PC-9 (cell line): ENCODE measurements at regions of chr3 and their contacts with region 1.

Region 1: DNA sequence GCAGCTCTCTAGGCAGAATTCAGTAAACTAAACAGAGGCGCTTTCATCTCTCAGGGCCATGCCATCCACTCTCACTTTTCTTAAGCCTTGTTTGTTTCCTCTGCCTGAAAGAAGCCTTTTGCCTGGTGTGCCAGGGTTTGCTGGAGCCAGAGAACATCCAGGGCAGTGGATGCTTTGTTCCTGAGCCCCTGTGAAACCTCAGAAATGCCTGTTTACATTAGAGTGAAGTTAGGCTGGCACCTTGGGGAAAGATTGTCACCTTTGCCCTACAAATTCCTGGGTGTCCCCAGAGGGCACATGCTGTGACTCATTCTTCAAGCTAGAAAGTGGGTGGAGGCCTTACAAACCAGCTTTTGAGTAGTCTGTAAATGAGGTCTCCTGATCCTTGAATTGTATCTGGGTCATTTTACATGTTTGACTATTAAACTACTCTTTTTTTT is 10.7 kb upstream of the TRAK1 start:
- DNase-seq: peak; percentile 86 to 96
- H3K4me3 ChIP-seq: peak overlapping the region; percentile 31; the same call in 1 of the 2 replicates
- H3K27ac ChIP-seq: peak overlapping the region; percentile 87
- H3K4me1 ChIP-seq: peaks cover 42% of the 10 kb centered on the region
- H3K27me3 ChIP-seq: no peaks in the 10 kb centered on the region
- CTCF ChIP-seq: no peak

Region 2: GRCh38 chr3:41681479-41681878 is 399.0 kb before region 1 on chr3:
- CTCF ChIA-PET with region 1: no interaction called
- POLR2A ChIA-PET with region 1: no interaction called
- intact Hi-C with region 1: loop called (anchors 10 kb)
- DNase-seq: peak; percentile 35 to 74
- H3K4me3 ChIP-seq: no peak overlapping the region
- H3K27ac ChIP-seq: 0 out of 2 replicates have a peak overlapping the region, but pooled peaks have one; percentile 33
- H3K4me1 ChIP-seq: peaks cover 21% of the 10 kb centered on the region
- H3K27me3 ChIP-seq: no peaks in the 10 kb centered on the region
- CTCF ChIP-seq: no peak

Region 3: DNA sequence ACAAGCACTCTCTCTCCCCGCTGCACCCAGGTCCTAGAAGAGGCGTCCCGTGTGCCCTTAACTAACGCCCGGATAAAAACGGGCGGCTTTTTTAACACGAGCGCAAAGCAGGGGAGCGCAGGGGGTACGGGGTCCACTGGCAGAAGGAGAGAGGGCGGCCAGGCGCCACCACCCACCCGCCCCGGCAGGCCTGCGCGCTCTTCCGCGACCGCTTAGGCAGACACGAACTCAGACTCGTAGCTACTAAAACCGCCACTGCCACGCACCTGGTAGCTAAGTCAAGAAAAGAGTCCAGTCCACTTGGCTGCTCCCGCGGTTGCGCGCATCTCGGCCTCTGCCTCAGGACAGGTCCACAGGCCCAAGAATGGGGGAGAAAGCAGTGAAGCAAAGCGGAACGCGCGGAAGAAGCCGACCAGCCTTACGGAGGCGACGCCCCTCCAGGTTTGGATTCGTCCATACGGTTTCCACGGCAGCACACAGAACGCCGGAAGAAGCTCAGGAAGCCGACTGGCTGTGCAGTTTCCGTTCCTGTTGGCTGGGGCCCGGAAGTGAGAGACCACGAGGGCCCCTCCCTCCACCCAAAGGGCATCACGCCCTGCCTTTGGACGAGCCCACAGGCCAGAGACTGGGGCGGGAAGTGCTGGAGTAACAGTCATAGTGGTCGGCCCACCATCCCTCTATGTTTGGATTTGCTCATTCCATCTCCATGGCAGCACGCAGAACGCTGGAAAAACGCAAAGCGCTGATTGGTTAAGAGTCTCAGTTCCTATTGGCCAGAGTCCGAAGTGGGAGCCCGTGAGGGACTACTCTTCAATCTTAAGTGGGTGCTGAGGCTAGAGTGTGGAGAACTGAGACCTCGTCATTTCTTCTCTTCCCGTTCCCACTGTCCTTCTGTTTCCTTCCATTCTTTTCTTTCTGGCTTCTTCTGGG is 118.5 kb before region 1 on chr3 and contains the start of gene ULK4:
- CTCF ChIA-PET with region 1: no interaction called
- POLR2A ChIA-PET with region 1: no interaction called
- intact Hi-C with region 1: loop called (anchors 2 kb)
- DNase-seq: peak; percentile 97
- H3K4me3 ChIP-seq: peak within 1 kb of the TSS; percentile 93
- H3K27ac ChIP-seq: peak within 1 kb of the TSS; percentile 18; the same call in 1 of the 2 replicates
- H3K4me1 ChIP-seq: 0 out of 2 replicates have a peak, but pooled peaks cover 14% of the 10 kb centered on the region
- H3K27me3 ChIP-seq: no peaks in the 10 kb centered on the region
- CTCF ChIP-seq: no peak
- total RNA-seq, gene ULK4: 5.9 and 8.7 TPM in 2 replicates

Region 4: DNA sequence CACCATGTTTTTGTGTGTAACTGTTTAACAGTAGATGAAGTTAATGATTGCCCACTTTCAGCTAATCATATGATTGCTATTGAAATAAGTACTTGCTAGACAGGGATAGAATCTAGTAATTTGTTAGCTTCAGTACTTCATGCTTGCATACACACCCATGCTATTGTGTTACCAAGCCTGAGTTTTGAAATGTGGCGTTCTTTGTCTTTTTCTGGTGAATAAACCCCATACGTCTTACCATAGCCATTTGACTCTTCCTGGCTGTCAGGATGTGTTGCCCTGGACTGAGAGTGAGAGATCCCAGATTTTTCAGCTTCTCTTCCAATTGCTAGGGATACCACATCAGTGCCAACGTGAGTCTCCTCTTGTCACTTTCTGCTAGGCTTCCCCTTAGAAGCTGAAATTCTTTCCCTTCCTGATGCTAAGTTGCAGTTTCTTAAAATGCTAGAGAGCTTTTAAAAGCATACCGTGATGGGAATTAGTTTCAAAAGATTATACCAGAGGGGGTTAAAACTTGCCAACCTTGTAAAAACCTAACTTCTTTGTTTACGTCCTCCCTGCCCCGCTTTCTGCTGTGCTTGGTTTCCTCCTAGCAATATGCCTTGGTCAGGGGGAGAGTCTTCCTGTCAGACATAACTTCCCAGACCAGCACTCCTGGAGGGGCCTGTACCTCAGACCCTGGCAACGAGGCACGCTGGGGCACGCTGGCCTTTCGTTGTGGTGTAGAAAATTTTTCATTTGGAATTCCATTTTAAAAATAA is 55.7 kb before region 1 on chr3:
- CTCF ChIA-PET with region 1: no interaction called
- POLR2A ChIA-PET with region 1: interaction called, 4 read pairs
- intact Hi-C with region 1: loop called (anchors 1 kb)
- DNase-seq: no peak
- H3K4me3 ChIP-seq: no peak overlapping the region
- H3K27ac ChIP-seq: no peak overlapping the region
- H3K4me1 ChIP-seq: peaks cover 35% of the 10 kb centered on the region
- H3K27me3 ChIP-seq: no peaks in the 10 kb centered on the region
- CTCF ChIP-seq: no peak

Region 5: DNA sequence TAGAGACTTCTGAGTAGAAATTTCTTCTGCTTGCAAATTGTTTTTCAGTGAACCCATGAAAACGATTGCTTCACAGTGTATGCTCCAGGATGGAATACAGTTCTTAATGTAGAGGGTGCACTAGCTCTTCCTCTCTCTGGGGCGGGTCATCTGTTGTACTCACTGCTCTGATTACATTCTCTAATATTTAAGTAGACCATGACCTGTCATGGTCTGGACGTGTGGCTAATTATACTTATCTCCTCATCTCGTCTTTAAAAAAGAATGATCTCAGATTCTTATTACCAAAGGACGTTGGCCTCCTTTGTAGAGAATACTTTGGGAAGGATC is 37.8 kb before region 1 on chr3:
- CTCF ChIA-PET with region 1: no interaction called
- POLR2A ChIA-PET with region 1: interaction called, 17 read pairs
- intact Hi-C with region 1: no loop called
- DNase-seq: no peak
- H3K4me3 ChIP-seq: no peak overlapping the region
- H3K27ac ChIP-seq: no peak overlapping the region
- H3K4me1 ChIP-seq: peaks cover 21% of the 10 kb centered on the region
- H3K27me3 ChIP-seq: no peaks in the 10 kb centered on the region
- CTCF ChIP-seq: no peak

Region 6: DNA sequence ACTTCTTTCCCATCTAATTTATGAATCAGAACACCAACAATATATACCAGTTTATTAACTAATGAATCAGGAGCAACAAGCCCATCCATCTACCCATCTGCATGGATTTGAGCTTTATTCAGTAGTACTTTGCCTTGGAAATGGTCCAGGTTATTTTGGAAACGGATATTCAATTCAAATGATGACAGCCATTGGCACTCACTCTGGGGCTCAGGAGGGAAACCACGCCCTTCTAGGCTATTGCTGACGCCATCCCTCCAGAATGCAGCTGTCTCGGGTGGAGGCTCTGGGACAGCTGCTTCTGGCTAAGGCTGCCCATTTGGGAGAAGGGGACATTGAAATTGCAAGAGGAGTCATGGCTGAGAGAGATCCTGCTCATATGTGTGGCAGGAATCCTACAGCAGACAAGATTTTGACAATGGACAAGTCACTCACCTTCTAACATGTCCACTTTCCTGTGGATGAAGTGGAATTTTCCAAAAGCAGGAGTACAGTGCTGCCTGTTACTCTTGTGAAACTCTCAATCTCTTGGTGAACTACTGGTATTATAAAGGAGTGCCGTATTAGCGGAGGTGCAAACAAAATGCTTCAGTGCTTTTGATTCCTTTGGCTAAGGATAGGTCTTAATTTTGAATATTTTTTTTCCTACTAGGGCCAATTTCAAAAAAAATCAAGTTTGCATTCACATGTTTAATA is 18.6 kb before region 1 on chr3:
- CTCF ChIA-PET with region 1: interaction called, 13 read pairs
- POLR2A ChIA-PET with region 1: no interaction called
- intact Hi-C with region 1: loop called (anchors 1 kb)
- DNase-seq: peak; percentile 71 to 76
- H3K4me3 ChIP-seq: no peak overlapping the region
- H3K27ac ChIP-seq: peak overlapping the region; percentile 29; the same call in 1 of the 2 replicates
- H3K4me1 ChIP-seq: peaks cover 20% of the 10 kb centered on the region
- H3K27me3 ChIP-seq: no peaks in the 10 kb centered on the region
- CTCF ChIP-seq: no peak

Region 7: DNA sequence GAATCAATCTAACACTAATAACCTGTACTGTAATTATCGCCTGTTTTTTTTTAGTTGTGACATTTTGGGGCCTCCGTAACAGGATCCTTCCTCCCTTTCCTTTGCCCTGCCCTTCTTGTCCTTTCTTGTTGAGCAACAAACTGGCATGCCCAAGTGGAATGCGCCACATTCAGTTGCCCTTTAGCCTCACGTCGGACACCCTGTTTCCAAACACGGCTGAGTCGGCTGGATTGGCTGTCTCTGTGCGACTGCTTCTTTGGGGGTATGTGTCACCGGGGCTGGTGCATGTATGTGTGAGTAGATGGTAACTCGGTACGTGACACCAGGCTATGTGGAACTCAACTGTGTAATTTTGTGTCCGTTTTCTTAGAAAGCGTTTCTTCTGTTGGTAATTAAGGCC is 34.8 kb after region 1 on chr3:
- CTCF ChIA-PET with region 1: no interaction called
- POLR2A ChIA-PET with region 1: no interaction called
- intact Hi-C with region 1: no loop called
- DNase-seq: no peak
- H3K4me3 ChIP-seq: no peak overlapping the region
- H3K27ac ChIP-seq: no peak overlapping the region
- H3K4me1 ChIP-seq: peaks cover 5% of the 10 kb centered on the region
- H3K27me3 ChIP-seq: no peaks in the 10 kb centered on the region
- CTCF ChIP-seq: no peak

Region 8: GRCh38 chr3:42205800-42206514 is 125.5 kb after region 1 on chr3:
- CTCF ChIA-PET with region 1: no interaction called
- POLR2A ChIA-PET with region 1: no interaction called
- intact Hi-C with region 1: no loop called
- DNase-seq: no peak
- H3K4me3 ChIP-seq: no peak overlapping the region
- H3K27ac ChIP-seq: no peak overlapping the region
- H3K4me1 ChIP-seq: no peaks in the 10 kb centered on the region
- H3K27me3 ChIP-seq: no peaks in the 10 kb centered on the region
- CTCF ChIP-seq: no peak

Region 9: GRCh38 chr3:42638339-42638842 is 557.9 kb after region 1 on chr3:
- CTCF ChIA-PET with region 1: no interaction called
- POLR2A ChIA-PET with region 1: no interaction called
- intact Hi-C with region 1: no loop called
- DNase-seq: no peak
- H3K4me3 ChIP-seq: no peak overlapping the region
- H3K27ac ChIP-seq: no peak overlapping the region
- H3K4me1 ChIP-seq: no peaks in the 10 kb centered on the region
- H3K27me3 ChIP-seq: no peaks in the 10 kb centered on the region
- CTCF ChIP-seq: no peak